ENCODE measurements at regions of chr16 and their contacts with region 1.

Region 1: GRCh38 chr16:68445458-68445857 is 2.9 kb downstream of the SMPD3 start:
- DNase-seq: peak; percentile 78
- ATAC-seq: no peak
- H3K4me3 Mint-ChIP-seq: no peak overlapping the region
- H3K27ac Mint-ChIP-seq: no peak overlapping the region
- H3K4me1 Mint-ChIP-seq: peaks cover 18% of the 10 kb centered on the region
- H3K27me3 Mint-ChIP-seq: peaks cover 36% of the 10 kb centered on the region

Region 2: GRCh38 chr16:68417711-68418301 is 27.7 kb before region 1 on chr16:
- CTCF ChIA-PET with region 1: interaction called, 15 read pairs
- POLR2A ChIA-PET with region 1: interaction called, 5 read pairs
- DNase-seq: peak; percentile 87
- ATAC-seq: peak; percentile 97
- H3K4me3 Mint-ChIP-seq: peak overlapping the region; percentile 76
- H3K27ac Mint-ChIP-seq: peak overlapping the region; percentile 90
- H3K4me1 Mint-ChIP-seq: peaks cover 36% of the 10 kb centered on the region
- H3K27me3 Mint-ChIP-seq: no peaks in the 10 kb centered on the region

Region 3: DNA sequence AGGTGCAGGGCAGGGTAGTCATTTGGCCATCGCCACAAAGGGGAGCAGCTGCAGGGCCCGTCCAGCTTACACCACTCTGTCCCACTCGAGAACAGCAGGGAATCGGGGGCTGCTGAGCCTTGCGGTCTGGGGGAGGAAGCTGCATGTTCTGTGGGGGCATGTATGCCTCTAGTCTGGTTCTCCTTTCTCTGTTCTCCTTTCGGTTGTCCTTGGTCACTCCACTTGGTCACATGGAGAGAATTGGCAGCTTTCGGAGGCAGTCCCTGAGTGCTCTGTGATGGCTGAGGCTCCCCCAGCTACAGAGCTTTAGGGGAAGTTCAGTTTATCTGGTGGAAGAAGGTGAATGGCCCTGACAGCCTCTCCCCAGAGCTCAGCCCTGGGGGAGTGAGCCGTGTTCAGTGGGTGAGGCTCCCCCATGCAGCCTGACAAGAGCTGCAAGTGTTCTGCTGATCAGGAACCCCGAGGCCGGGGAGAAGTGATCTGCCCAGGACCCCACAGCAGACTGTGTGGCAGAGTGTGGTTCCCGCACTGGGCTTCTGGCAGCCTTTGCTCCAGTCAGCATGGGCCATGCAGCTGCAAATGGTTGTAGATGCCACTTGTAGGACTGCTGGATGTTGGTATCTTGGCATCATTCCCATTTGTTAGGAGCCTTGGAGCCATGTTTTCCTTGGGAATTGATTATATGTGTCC is 25.1 kb after region 1 on chr16:
- CTCF ChIA-PET with region 1: interaction called, 12 read pairs
- POLR2A ChIA-PET with region 1: no interaction called
- DNase-seq: peak; percentile 38
- ATAC-seq: peak; percentile 58
- H3K4me3 Mint-ChIP-seq: peak overlapping the region; percentile 69
- H3K27ac Mint-ChIP-seq: peak overlapping the region; percentile 81
- H3K4me1 Mint-ChIP-seq: peaks cover 46% of the 10 kb centered on the region
- H3K27me3 Mint-ChIP-seq: peaks cover 10% of the 10 kb centered on the region

Region 4: DNA sequence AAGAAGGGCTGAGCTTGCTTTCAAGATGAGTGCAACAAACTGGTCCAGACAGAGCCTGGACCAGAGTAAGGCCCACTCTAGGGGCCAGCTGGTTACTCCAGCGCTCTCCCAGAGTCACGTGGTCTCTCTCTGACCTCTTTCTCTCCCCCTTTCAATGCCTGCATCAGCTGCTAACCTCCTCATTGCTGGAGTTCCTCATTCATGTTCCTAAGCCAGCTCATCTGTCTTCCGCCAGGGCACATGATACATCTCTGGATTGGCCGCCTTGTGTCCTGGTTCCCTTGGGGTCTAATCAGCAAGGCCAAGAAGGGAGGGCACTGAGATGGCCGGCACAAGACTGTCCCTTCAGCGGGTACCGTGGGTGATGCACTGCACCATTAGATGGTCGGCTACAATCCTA is 66.7 kb after region 1 on chr16:
- CTCF ChIA-PET with region 1: interaction called, 22 read pairs
- POLR2A ChIA-PET with region 1: interaction called, 3 read pairs
- DNase-seq: no peak
- ATAC-seq: no peak
- H3K4me3 Mint-ChIP-seq: no peak overlapping the region
- H3K27ac Mint-ChIP-seq: no peak overlapping the region
- H3K4me1 Mint-ChIP-seq: peaks cover 12% of the 10 kb centered on the region
- H3K27me3 Mint-ChIP-seq: peaks cover 11% of the 10 kb centered on the region

Measured in activated CD8-positive, alpha-beta T cell treated with anti-CD3 and anti-CD28 coated beads, Interleukin-2, amount 10 ng/mL, durations not matched to agents 7 days and 5 days (primary cell).